ENCODE measurements at regions of chr19 and their contacts with region 1.

Region 1: DNA sequence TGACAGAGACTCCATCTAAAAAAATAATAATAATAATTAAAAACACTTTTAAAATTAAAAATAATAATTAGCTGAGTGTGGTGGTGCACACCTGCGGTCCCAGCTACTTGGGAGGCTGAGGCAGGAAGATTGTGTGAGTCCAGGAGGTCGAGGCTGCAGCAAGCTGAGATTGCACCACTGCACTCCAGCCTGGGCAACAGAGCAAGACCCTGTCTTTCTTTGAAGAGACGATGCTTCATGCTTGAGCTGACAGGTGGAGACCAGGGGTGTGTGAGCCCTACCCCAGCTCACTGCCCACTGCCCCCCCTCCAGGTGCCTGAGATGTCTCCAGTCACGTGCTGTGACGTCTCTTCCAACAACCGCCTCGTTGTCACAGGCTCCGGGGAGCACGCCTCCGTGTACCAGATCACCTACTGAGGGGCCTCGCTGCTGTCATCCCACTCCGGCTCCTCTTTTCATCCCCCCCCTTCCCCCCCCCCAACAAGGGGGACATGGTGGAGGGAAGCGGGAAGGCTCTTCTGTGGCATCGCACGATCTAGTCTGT is 17.3 kb downstream of the TLE6 start:
- DNase-seq: no peak
- ATAC-seq: no peak
- H3K4me3 ChIP-seq: no peak overlapping the region
- H3K27ac ChIP-seq: no peak overlapping the region
- H3K4me1 ChIP-seq: peaks cover 0 to 17% of the 10 kb centered on the region in 2 experiments; a peak in 3 of 5 replicates
- H3K27me3 ChIP-seq: no peaks in the 10 kb centered on the region; a peak in 1 of 5 replicates
- CTCF ChIP-seq: no peak
- EP300 ChIP-seq: no peak
- POLR2A ChIP-seq: no peak
- RAD21 ChIP-seq: no peak

Region 2: DNA sequence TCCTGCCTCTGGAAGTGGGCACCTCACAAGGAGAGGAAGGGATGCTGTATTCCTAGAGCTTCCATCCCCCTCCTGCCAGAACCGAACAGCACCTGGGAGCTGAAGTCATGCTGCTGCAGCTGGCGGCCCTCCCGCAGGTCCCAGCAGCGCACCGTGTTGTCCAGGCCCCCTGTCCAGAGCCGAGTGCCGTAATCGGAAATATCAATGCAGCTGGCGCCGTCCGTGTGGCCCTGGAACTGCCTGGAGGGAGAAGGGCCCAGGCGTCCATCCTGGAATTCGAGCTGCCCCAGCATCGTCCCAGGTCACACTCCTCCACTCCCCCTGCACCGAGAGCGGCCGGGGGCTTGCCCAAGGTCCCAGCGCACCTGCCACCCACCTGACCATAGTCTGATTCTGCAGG is 10.7 kb after region 1 on chr19:
- CTCF ChIA-PET with region 1: no interaction called
- POLR2A ChIA-PET with region 1: interaction called, 10 read pairs
- in situ Hi-C with region 1: no loop called
- intact Hi-C with region 1: no loop called
- DNase-seq: no peak
- ATAC-seq: no peak
- H3K4me3 ChIP-seq: no peak overlapping the region
- H3K27ac ChIP-seq: no peak overlapping the region
- H3K4me1 ChIP-seq: peaks cover 0 to 23% of the 10 kb centered on the region in 2 experiments; a peak in 2 of 5 replicates
- H3K27me3 ChIP-seq: no peaks in the 10 kb centered on the region; a peak in 1 of 5 replicates
- CTCF ChIP-seq: no peak
- EP300 ChIP-seq: no peak
- POLR2A ChIP-seq: no peak
- RAD21 ChIP-seq: no peak

Region 3: GRCh38 chr19:3047425-3048189 is 52.9 kb after region 1 on chr19:
- CTCF ChIA-PET with region 1: no interaction called
- POLR2A ChIA-PET with region 1: no interaction called
- in situ Hi-C with region 1: no loop called
- intact Hi-C with region 1: no loop called
- DNase-seq: peak; percentile 78 to 99 (median 86)
- ATAC-seq: peak; percentile 98
- H3K4me3 ChIP-seq: peak overlapping the region; percentile 43
- H3K27ac ChIP-seq: peak overlapping the region; percentile 77
- H3K4me1 ChIP-seq: peaks cover 6 to 31% of the 10 kb centered on the region in 2 experiments; a peak in 4 of 5 replicates
- H3K27me3 ChIP-seq: no peaks in the 10 kb centered on the region
- CTCF ChIP-seq: no peak
- EP300 ChIP-seq: peak; percentile 89
- POLR2A ChIP-seq: peak; percentile 64; the same call in 1 of the 2 replicates
- RAD21 ChIP-seq: peak in 1 of 2 experiments; percentile 22; a peak in 1 of 4 replicates

Region 4: GRCh38 chr19:3544742-3545668 is 550.3 kb after region 1 on chr19:
- CTCF ChIA-PET with region 1: no interaction called
- POLR2A ChIA-PET with region 1: no interaction called
- in situ Hi-C with region 1: no loop called
- intact Hi-C with region 1: no loop called
- DNase-seq: peak; percentile 81 to 85 (median 84)
- ATAC-seq: peak; percentile 93
- H3K4me3 ChIP-seq: no peak overlapping the region
- H3K27ac ChIP-seq: no peak overlapping the region
- H3K4me1 ChIP-seq: peaks cover 0 to 49% of the 10 kb centered on the region in 2 experiments; a peak in 3 of 5 replicates
- H3K27me3 ChIP-seq: no peaks in the 10 kb centered on the region
- CTCF ChIP-seq: peak; percentile 91 to 94 (median 94)
- EP300 ChIP-seq: no peak
- POLR2A ChIP-seq: no peak
- RAD21 ChIP-seq: peak; percentile 81 to 91

Measured in K562 (cell line).